ENCODE measurements at regions of chr3 and their contacts with region 1.

Region 1: DNA sequence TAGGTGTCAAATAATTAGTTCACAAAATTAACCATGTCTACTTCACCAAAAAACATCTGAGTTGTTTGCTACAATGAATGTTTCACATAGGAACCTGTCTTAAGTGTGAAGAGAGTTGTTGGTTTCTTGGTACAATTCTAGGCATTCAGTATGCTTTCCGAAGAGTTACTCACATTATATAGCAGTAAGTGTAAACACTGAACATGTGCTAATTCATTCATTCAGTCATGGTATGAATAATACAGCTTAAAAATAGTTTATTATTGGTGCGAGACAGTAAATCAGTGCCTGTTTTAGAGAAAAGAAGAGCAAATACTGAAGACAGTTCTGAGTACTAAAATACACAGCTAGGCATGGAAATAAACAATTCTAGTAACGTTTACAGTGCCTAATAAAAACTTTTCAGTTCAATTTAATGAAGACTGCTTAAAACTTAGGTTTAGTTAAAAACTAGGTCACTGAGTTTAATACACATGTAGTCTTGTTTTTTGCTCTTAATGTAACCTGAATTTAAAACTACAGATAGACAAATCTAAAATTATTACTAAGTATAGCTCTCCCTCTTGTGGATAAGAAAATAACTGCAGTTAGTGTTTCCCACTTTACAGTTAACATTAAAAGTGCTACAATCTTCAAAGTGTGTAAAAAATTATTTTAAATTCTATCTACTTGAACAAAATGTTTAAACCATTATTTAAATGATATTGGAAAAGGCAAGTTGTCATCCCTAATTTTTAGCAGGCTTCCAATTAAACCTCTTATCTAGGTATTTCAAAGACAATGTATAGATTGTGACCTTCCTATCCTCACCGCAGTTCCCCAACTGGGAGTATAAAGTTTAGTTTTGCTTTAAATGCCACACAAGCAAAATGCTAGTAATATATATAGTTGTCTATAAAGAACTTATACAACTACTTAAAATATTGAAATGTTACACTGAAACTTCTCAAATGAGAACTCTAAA is 20.1 kb upstream of the ZCWPW2 start:
- DNase-seq: no peak
- H3K4me3 Mint-ChIP-seq: no peak overlapping the region
- H3K27ac Mint-ChIP-seq: peak overlapping the region; percentile 29
- H3K4me1 Mint-ChIP-seq: peaks cover 44% of the 10 kb centered on the region
- H3K27me3 Mint-ChIP-seq: peaks cover 1% of the 10 kb centered on the region

Region 2: GRCh38 chr3:27632431-27633223 is 695.8 kb before region 1 on chr3:
- intact Hi-C with region 1: loop called (anchors 1 kb)
- DNase-seq: peak; percentile 25
- H3K4me3 Mint-ChIP-seq: peak overlapping the region; percentile 86
- H3K27ac Mint-ChIP-seq: peak overlapping the region; percentile 82
- H3K4me1 Mint-ChIP-seq: peaks cover 41% of the 10 kb centered on the region
- H3K27me3 Mint-ChIP-seq: no peaks in the 10 kb centered on the region

Region 3: DNA sequence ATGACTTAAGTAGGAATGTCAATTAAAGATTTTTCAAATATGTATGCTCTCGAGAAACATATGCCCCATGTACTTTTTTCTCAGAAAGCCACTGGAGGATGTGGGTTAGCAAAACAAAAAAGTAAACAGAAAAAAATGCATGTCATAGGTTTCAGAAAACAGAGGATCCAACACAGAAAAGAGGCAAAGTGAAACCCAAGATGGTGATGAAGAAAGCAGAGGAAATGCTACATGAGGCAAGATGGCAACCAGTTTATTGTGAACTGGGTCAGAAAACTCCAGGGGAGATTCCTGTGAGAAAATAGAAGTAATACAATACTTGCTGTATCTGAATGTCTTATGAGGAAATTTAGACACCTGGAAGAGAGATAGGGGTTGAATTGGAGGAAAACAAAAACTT is 575.5 kb before region 1 on chr3:
- intact Hi-C with region 1: loop called (anchors 1 kb)
- DNase-seq: peak; percentile 17
- H3K4me3 Mint-ChIP-seq: peak overlapping the region; percentile 42
- H3K27ac Mint-ChIP-seq: peak overlapping the region; percentile 96
- H3K4me1 Mint-ChIP-seq: peaks cover 35% of the 10 kb centered on the region
- H3K27me3 Mint-ChIP-seq: no peaks in the 10 kb centered on the region

Region 4: GRCh38 chr3:27900316-27900715 is 428.2 kb before region 1 on chr3:
- intact Hi-C with region 1: loop called (anchors 2 kb)
- DNase-seq: peak; percentile 24
- H3K4me3 Mint-ChIP-seq: peak overlapping the region; percentile 2
- H3K27ac Mint-ChIP-seq: peak overlapping the region; percentile 24
- H3K4me1 Mint-ChIP-seq: peaks cover 56% of the 10 kb centered on the region
- H3K27me3 Mint-ChIP-seq: peaks cover 4% of the 10 kb centered on the region

Region 5: DNA sequence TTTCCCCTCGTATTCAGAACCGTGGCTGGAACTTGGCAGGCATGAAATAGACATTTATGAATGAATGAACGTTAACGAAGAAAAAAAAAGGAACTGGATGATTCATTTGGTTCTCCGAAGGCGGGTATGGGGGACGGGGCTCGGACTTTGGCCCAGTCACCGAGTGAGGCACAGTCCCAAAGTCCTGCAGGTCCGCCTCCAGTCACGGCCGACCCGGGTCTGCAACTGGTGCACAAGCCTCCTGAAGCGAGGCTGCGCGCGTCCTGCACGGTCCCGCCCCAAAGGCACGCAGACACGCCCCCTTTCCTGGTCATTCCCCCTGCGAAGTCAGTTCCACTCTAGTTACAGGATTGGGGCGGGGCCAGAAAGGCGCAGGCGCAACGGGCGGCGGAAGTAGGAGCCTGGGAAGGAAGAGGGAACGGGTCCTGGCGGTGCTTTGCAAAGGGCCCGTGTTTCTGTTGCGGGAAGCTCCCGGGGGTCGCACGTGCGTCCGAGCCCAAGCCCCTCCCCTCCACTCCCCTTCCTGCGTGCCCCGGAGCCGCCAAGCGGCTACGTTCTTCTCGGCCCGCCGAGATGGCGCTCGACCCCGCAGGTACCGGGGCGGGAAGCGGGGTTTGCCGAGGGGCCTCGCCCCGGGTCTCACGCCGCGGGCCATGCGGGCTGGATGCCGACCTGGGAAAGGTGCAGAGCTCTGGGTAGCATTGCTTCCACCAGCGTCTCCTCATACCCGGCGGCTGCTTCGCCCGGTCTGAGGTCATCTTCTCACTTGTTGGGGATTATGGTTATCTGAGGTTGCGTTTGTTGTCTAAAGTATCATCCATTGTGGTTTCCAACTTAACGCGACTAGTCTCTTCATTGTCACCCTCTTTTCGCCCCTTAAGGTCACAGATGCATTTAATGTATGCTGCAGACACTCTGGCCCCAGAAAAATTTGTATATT is 87.0 kb before region 1 on chr3 and contains the start of gene CMC1:
- intact Hi-C with region 1: loop called (anchors 1 kb)
- DNase-seq: peak; percentile 87
- H3K4me3 Mint-ChIP-seq: peak within 1 kb of the TSS; percentile 94
- H3K27ac Mint-ChIP-seq: peak within 1 kb of the TSS; percentile 96
- H3K4me1 Mint-ChIP-seq: peaks cover 37% of the 10 kb centered on the region
- H3K27me3 Mint-ChIP-seq: no peaks in the 10 kb centered on the region
- total RNA-seq, gene CMC1: 29.5 and 32.5 TPM in 2 replicates

Region 6: DNA sequence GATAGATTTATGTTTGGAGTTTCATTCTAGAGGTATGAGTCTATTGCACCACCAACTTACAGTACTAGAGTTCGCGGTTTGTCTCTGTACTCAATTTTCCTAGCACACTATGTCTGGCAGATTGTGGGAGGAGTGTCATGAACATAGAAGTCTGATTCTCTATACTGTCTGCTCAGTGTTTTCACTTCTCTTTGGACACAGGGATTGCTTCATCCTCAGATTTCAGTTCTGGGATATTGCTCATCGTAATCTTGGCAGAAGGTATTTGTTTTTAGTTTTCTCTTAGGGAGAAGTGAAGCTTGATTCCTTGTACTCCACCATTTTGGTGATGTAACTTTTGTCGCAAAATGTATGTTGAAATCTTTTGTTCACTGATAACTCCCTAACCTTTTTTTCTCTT is 48.0 kb after region 1 on chr3:
- intact Hi-C with region 1: no loop called
- DNase-seq: no peak
- H3K4me3 Mint-ChIP-seq: no peak overlapping the region
- H3K27ac Mint-ChIP-seq: no peak overlapping the region
- H3K4me1 Mint-ChIP-seq: no peaks in the 10 kb centered on the region
- H3K27me3 Mint-ChIP-seq: no peaks in the 10 kb centered on the region